ENCODE measurements at regions of chr1 and their contacts with region 1.

Region 1: GRCh38 chr1:229227298-229227919 is 43.5 kb upstream of the RAB4A start:
- DNase-seq: peak; percentile 90
- H3K4me3 ChIP-seq: no peak overlapping the region
- H3K27ac ChIP-seq: no peak overlapping the region
- H3K4me1 ChIP-seq: peaks cover 19% of the 10 kb centered on the region
- H3K27me3 ChIP-seq: no peaks in the 10 kb centered on the region
- CTCF ChIP-seq: peak; percentile 79 to 92 (median 82)
- POLR2A ChIP-seq: no peak

Region 2: GRCh38 chr1:228734881-228735801 is 492.3 kb before region 1 on chr1 and contains the start of gene RHOU:
- intact Hi-C with region 1: loop called (anchors 10 kb)
- DNase-seq: peak; percentile 76
- H3K4me3 ChIP-seq: peak within 1 kb of the TSS; percentile 81 to 83
- H3K27ac ChIP-seq: peak within 1 kb of the TSS; percentile 84 to 88
- H3K4me1 ChIP-seq: peaks cover 12% of the 10 kb centered on the region
- H3K27me3 ChIP-seq: no peaks in the 10 kb centered on the region
- CTCF ChIP-seq: peak; percentile 87 to 97 (median 95)
- POLR2A ChIP-seq: no peak
- total RNA-seq, gene RHOU: 31.0 to 33.6 TPM

Region 3: DNA sequence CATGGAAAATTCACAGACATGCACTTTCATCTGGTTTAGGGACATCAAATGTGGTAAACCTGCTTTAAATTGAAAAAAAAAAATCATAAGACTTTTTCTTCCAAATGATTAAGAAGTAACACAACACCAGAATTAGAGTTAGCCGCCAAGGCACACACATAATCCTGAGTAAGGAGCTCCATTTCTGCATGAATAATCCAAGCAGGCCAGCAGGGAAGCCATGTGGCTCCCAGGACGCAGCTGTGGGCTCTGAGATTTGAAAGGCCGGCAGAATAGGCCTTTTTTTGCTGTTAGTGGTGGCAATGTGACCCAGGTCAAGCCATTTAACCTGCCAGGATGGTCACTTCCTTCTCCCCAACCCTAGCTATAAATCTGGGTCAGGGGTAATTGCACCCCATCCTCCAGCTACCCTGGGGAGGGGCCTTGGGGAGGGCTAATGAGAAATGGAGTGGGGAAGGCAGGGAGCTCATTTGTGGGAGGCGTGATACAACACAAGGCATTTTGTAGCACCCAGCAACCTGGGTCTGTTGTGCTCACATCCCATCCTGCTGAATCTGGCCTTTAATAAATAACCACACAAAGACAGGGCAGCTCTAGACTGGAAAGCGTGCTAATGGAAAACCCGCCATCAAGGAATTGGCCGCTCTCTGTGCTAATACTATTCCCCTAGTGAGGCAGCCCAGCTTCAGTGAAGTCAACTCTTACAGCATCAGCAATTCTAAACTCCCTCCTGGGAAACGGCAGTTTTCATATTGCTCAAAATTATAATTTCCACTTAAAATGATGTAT is 313.6 kb before region 1 on chr1:
- intact Hi-C with region 1: no loop called
- DNase-seq: no peak
- H3K4me3 ChIP-seq: no peak overlapping the region
- H3K27ac ChIP-seq: no peak overlapping the region
- H3K4me1 ChIP-seq: no peaks in the 10 kb centered on the region
- H3K27me3 ChIP-seq: no peaks in the 10 kb centered on the region
- CTCF ChIP-seq: no peak
- POLR2A ChIP-seq: no peak

Region 4: GRCh38 chr1:229325853-229326502 is 98.6 kb after region 1 on chr1:
- intact Hi-C with region 1: no loop called
- DNase-seq: no peak
- H3K4me3 ChIP-seq: no peak overlapping the region
- H3K27ac ChIP-seq: no peak overlapping the region
- H3K4me1 ChIP-seq: no peaks in the 10 kb centered on the region
- H3K27me3 ChIP-seq: no peaks in the 10 kb centered on the region
- CTCF ChIP-seq: no peak
- POLR2A ChIP-seq: no peak

Measured in testis (tissue), 5 donors.